A673 (cell line): ENCODE measurements at regions of chr3 and their contacts with region 1.

Region 1: DNA sequence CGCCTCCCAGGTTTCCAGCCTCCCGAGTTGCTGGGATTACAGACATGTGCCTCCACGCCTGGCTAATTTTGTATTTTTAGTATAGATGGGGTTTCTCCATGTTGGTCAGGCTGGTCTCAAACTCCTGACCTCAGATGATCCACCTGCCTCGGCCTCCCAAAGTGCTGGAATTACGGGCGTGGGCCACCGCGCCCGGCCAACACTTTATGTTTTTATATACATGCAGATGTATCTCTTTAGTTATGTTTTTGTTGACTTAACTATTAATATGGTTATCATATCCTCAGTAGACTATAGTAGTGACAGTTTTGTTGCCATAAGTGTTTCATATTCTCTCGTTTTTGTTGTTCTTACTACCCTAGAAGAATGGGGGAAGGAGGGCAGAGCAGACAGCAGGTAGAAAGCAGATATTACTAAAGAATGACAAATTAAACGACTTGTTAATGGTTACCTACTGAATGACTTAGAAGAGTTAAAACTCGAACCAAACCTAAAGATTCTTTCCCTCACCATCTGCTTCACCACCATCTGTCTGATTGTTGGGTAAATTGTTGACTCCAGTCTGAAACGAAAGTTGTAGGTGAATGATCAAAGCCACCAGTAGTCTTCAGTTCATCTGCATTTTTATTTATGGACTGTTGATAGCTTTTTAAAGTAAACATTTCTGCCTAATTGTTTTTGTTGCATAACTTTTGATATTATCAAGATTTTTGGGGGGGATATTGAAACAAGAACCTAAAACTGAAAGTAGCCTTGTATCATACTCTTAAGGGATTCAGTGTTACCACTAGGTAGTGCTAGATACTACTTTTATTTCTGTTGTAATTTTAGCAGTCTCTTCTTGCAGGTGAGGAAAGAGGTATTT is 89.3 kb downstream of the RASA2 start:
- DNase-seq: peak; percentile 11
- H3K4me3 ChIP-seq: no peak overlapping the region
- H3K27ac ChIP-seq: no peak overlapping the region
- H3K4me1 ChIP-seq: no peaks in the 10 kb centered on the region
- H3K27me3 ChIP-seq: no peaks in the 10 kb centered on the region
- CTCF ChIP-seq: peak; percentile 63

Region 2: DNA sequence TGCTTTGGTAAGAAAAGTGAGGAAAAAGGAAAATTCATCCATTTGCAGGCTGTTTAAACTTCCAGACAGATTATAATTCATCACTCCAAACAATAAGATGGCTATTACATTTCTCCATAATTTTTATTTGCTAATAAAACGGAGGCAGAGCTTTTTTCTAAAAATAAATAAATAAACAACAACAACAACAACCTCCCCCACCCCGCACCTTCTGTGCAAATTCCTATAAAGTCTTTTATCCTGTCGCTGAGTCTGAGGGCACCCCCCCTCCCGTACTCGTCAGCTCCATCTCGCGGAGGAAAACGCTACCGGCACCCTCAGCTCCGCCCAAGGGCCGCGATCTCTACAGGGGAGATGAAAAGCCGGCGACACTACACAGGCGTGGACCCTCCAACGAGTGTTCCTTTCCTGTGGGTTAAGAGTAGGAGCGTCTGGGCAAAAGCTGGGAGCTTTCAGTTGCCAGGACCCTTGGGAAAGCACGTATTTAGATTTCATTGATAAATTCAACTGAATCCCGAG is 299.3 kb after region 1 on chr3:
- CTCF ChIA-PET with region 1: no interaction called
- POLR2A ChIA-PET with region 1: no interaction called
- intact Hi-C with region 1: loop called (anchors 5 kb)
- DNase-seq: peak; percentile 93
- H3K4me3 ChIP-seq: peak overlapping the region; percentile 99
- H3K27ac ChIP-seq: peak overlapping the region; percentile 97
- H3K4me1 ChIP-seq: peaks cover 23% of the 10 kb centered on the region
- H3K27me3 ChIP-seq: no peaks in the 10 kb centered on the region
- CTCF ChIP-seq: peak; percentile 93

Region 3: DNA sequence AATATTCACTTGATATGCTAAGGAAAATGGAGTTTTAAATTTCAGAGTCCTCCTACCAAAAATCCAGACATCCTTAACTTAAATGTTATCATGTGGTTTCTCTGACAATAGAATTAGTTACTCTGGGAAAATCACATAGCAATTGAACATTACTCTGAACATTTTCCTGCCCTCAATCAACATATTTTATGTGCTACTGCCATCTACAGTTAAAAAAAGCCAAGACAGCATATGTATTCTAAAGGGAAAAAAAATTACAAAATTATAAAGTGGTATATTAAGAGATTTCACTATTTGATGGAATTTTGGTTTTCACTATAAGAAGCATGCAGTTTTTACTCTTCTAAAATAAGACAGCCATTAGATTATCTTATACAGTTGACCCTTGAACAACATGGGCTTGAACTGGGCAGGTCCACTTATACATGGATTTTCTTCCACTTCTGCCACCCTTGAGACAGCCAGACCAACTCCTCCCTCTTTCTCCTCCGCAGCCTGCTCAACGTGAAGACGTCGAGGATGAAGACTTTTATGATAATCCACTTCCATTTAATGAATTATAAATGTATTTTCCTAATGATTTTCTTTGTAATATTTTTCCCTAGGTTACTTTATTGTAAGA is 422.7 kb after region 1 on chr3:
- CTCF ChIA-PET with region 1: no interaction called
- POLR2A ChIA-PET with region 1: no interaction called
- intact Hi-C with region 1: loop called (anchors 5 kb)
- DNase-seq: peak; percentile 37
- H3K4me3 ChIP-seq: no peak overlapping the region
- H3K27ac ChIP-seq: no peak overlapping the region
- H3K4me1 ChIP-seq: no peaks in the 10 kb centered on the region
- H3K27me3 ChIP-seq: no peaks in the 10 kb centered on the region
- CTCF ChIP-seq: peak; percentile 54